A549 (cell line): ENCODE measurements at regions of chr3 and their contacts with region 1.

Region 1: DNA sequence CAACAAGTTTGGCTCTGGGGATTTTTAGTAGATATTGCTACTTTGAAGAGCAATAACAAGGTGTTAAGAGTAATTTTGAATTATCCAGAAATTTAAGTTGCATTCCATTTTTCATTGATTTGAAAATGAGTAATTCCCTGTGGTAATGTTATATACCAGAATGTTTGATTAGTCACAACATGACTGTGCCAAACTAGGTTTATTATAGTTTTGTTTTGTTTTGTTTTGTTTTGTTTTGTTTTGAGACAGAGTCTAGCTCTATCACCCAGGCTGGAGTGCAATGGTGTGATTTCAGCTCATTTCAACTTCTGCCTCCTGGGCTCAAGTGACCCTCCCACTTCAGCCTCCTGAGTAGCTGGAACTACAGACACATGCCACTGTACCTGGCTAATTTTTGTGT is 40.7 kb downstream of the CNOT10 start:
- DNase-seq: no peak
- ATAC-seq: no peak
- H3K4me3 ChIP-seq: no peak overlapping the region
- H3K27ac ChIP-seq: no peak overlapping the region
- H3K4me1 ChIP-seq: no peaks in the 10 kb centered on the region
- CTCF ChIP-seq: no peak
- EP300 ChIP-seq: no peak
- POLR2A ChIP-seq: no peak
- RAD21 ChIP-seq: no peak

Region 2: GRCh38 chr3:32709346-32709745 is 16.4 kb before region 1 on chr3:
- CTCF ChIA-PET with region 1: no interaction called
- POLR2A ChIA-PET with region 1: interaction called, 12 read pairs
- DNase-seq: no peak
- ATAC-seq: no peak
- H3K4me3 ChIP-seq: no peak overlapping the region
- H3K27ac ChIP-seq: no peak overlapping the region
- H3K4me1 ChIP-seq: no peaks in the 10 kb centered on the region
- CTCF ChIP-seq: no peak
- EP300 ChIP-seq: no peak
- POLR2A ChIP-seq: no peak
- RAD21 ChIP-seq: no peak